Prostate gland (tissue), 2 donors: ENCODE measurements at regions of chr9 and their contacts with region 1.

Region 1: DNA sequence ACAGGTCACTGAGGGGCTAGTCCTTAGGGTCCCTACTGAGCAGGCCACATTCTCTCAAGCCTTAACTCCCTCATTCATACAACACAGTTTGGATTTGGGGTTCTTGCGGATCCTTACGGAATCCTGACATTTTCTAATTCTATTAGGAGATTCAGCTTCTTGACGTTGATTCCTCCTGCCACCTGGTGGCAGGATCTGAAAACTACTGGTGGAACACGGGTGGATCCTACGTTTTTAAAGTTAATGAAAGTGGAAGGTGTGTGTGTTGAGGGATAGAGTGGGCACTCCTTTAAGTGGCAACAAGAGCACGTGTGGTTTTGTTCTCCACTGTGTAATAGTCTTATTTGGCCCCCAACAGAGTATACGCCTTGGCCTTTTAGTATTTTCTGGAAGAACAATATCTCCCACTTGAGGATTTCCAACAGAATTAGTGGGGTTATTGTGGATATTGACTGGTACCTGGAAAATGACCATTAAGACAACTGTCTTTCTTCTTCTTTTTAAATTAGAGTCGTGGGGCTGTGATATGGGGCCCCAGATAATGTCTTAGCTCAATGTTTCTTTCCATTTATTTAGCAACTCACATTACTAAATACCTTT is 25.2 kb downstream of the SLC28A3 start:
- DNase-seq: peak; percentile 50
- H3K4me3 ChIP-seq: no peak overlapping the region
- H3K27ac ChIP-seq: no peak overlapping the region
- H3K4me1 ChIP-seq: no peaks in the 10 kb centered on the region
- H3K27me3 ChIP-seq: no peaks in the 10 kb centered on the region
- CTCF ChIP-seq: peak; percentile 10 to 76 (median 62)
- POLR2A ChIP-seq: no peak

Region 2: DNA sequence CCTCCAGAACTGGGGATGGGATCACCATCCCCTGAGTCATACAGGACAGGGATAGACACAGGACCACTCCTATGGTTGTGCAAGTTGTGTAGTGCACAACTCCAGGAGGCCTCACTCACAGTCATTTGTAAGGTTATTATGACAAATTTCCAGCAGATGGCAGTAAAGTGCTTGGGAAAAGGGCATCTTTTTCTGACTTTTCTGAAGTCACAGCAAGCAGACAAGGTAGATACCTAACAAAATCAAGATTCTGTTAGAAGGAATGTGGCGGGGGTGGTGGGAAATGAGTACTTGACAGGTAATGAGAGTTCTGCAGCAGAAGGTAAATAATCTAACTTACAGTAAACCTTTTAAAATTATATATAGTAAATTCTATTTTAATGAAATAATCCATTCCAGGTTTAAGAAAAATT is 377.5 kb before region 1 on chr9:
- intact Hi-C with region 1: loop called (anchors 5 kb)
- DNase-seq: peak; percentile 25
- H3K4me3 ChIP-seq: no peak overlapping the region
- H3K27ac ChIP-seq: no peak overlapping the region
- H3K4me1 ChIP-seq: peaks cover 4% of the 10 kb centered on the region
- H3K27me3 ChIP-seq: no peaks in the 10 kb centered on the region
- CTCF ChIP-seq: peak; percentile 33 to 75 (median 66)
- POLR2A ChIP-seq: no peak

Region 3: GRCh38 chr9:84061594-84062193 is 253.7 kb before region 1 on chr9:
- intact Hi-C with region 1: no loop called
- DNase-seq: no peak
- H3K4me3 ChIP-seq: no peak overlapping the region
- H3K27ac ChIP-seq: no peak overlapping the region
- H3K4me1 ChIP-seq: no peaks in the 10 kb centered on the region
- H3K27me3 ChIP-seq: no peaks in the 10 kb centered on the region
- CTCF ChIP-seq: no peak
- POLR2A ChIP-seq: no peak

Region 4: DNA sequence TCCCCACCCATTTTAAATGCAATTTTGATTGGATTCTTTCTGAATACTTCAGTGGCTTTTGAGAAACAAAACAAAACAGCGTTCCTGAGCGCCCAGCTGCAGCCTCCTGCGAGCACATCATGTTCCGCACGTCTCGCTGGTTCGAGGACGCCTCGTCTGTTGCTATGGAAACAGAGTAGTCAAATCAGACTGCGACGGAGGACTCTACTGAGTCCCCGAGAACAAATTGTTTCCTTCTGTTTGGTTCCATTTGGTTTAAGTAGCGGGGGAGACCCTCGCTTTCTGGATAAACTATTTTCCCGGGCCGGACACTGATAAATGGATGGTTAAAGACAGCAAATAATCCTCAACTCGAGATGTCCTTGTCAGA is 43.9 kb before region 1 on chr9:
- intact Hi-C with region 1: loop called (anchors 5 kb)
- DNase-seq: peak; percentile 7
- H3K4me3 ChIP-seq: peak overlapping the region in 1 of 2 donors; percentile 2
- H3K27ac ChIP-seq: no peak overlapping the region
- H3K4me1 ChIP-seq: no peaks in the 10 kb centered on the region
- H3K27me3 ChIP-seq: peaks cover 4% of the 10 kb centered on the region
- CTCF ChIP-seq: no peak
- POLR2A ChIP-seq: no peak

Region 5: DNA sequence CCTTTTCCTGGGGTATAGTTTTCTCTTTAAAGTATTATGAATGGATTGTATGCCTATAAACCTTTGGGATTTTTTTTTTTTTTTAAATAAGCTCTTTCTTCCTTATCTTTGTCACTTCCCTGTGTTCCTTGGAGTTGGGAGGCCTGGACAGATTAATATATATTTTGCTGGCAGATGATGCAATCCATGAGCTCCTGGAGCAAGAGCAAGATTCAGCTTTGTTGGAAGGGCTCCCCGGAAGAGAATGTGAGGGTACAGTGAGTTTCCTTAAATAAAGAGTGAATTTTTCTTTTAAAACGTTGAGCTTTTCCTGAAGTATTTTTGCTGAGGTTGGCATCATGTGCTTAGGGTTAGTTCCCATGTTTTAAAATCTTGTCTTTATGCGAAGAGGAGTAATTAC is 123.9 kb after region 1 on chr9:
- intact Hi-C with region 1: no loop called
- DNase-seq: no peak
- H3K4me3 ChIP-seq: no peak overlapping the region
- H3K27ac ChIP-seq: no peak overlapping the region
- H3K4me1 ChIP-seq: no peaks in the 10 kb centered on the region
- H3K27me3 ChIP-seq: no peaks in the 10 kb centered on the region
- CTCF ChIP-seq: no peak
- POLR2A ChIP-seq: no peak

Region 6: DNA sequence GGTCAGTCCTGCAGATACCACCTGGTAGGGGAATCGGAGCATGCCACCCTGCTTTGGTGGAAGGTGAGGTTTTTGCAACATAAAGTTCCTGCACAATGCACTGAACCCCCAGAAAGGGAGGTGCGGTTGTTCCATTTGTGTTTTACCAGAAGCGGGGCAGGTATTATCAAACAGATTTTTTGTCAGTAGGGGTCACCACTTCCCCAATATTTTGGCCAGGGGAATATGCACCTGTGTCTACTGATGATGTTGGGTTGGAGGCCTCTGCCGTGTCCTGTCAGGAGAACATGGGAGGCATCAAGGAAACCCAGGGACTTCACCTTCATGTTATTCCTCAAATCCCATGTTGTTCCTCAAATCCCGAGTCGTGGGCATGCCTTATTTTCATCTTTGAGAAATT is 792.9 kb after region 1 on chr9:
- intact Hi-C with region 1: no loop called
- DNase-seq: no peak
- H3K4me3 ChIP-seq: no peak overlapping the region
- H3K27ac ChIP-seq: no peak overlapping the region
- H3K4me1 ChIP-seq: no peaks in the 10 kb centered on the region
- H3K27me3 ChIP-seq: no peaks in the 10 kb centered on the region
- CTCF ChIP-seq: no peak
- POLR2A ChIP-seq: no peak